Heart right ventricle (tissue), 16 donors: ENCODE measurements at regions of chr14 and their contacts with region 1.

Region 1: DNA sequence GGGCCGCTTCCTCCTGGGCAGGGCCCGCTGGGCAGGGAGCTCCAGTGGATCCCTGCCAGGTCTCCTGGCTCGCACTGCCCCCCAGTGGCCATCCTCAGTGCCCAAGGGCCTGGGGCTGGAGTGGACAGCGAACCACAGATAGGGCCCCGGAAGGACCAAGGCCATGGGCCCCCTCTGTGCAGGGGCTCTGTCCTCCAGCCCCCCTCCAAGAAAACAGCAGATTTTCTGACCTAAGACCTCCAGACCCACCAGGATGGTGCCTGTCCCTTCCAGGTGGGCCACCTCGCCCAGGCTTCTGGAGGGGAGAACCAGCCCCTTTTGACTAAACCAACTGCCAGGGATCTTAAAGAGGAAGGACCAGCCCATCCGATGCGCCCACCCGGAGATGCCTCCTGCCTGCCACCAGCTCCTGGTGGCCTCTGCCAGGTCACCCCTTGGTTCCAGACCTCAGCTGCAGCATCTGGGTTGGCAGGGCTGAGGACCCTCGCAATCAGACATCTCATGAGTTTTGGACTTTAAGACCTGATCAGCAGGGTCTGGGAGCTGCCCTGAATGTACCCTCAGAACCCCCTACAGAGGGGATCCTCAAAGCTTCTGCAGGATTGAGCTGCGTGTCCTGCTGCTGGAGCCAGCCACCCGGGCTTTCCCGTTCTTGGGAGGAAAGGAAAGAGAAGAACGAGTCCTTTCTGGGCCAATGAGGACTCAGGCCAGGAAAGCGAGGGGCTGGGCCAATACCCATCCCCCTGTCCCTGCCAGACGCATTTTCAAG is 325.8 kb upstream of the DIO3 start:
- DNase-seq: peak; percentile 21 to 55
- ATAC-seq: peak in 5 of 8 donors; percentile 65 to 68 (median 66)
- H3K4me3 ChIP-seq: no peak overlapping the region
- H3K27ac ChIP-seq: no peak overlapping the region
- H3K4me1 ChIP-seq: no peaks in the 10 kb centered on the region
- H3K27me3 ChIP-seq: peaks cover 0 to 46% (median 25%) of the 10 kb centered on the region in 7 donors
- CTCF ChIP-seq: peak in 7 of 9 donors; percentile 56 to 74 (median 61)

Region 2: DNA sequence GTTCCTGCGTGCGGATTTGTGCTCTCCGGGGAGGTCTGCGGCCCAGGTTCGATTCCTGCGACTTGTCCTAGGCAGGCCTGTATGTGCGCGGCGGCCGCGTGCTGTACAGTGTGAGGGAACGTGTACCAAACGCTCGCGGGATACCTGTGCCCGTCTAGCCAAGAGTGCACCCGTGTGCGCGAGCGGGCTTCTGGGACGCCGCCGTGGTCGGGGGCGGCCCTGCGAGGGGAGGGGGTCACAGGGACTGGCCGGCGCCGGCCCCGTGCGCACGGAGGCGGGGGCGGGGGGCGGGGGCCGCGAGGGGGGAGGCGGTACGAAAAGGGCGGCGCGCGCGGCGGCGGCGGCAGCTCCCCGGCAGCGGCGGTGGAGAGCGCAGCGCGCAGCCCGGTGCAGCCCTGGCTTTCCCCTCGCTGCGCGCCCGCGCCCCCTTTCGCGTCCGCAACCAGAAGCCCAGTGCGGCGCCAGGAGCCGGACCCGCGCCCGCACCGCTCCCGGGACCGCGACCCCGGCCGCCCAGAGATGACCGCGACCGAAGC is 508.9 kb before region 1 on chr14 and contains the start of gene DLK1:
- intact Hi-C with region 1: loop called in 1 of 10 experiments (anchors 10 kb)
- DNase-seq: no peak
- ATAC-seq: peak in 1 of 8 donors; percentile 20
- H3K4me3 ChIP-seq: peak within 1 kb of the TSS in 1 of 10 donors; percentile 11
- H3K27ac ChIP-seq: no peak within 1 kb of the TSS
- H3K4me1 ChIP-seq: no peaks in the 10 kb centered on the region
- H3K27me3 ChIP-seq: peaks cover 15 to 98% (median 92%) of the 10 kb centered on the region in 7 donors
- CTCF ChIP-seq: no peak
- total RNA-seq, gene DLK1: 1.3 to 35.0 (median 7.4) TPM

Region 3: DNA sequence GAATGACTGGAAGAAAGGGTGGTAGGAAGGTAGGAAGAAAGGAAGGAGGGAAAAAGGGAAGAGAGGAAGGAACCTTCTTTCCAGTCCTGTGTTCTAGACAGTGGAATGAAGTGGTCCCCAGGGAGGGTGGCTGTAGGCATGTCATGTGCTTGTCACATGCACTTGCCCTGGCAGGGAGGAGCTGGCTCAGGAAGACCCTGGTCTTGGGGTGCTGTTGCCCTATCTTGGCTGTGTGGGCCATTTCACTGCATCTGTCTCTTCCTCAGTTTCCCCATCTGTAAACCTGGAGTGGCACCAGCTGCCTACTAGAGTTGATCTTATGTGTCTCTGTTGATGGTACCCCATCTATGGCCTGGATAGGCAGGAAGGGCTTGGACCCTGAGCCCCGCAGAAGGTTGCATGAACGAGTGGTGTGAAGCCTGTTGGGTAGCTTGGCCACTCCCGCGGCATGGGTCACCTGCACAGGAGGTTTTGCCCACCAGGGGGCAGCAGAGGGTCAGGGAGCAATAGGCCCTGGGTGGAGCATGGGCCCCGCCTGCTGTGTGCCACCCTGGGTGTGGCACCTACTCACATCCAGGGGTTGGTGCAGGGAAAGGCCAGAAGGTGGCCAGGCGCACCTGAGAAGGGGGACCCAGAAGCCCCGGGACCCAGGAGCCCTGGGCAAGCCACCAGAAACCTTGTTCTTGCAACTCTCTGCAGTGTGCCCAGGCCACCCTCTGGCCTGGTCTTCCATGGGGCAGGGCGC is 384.5 kb before region 1 on chr14:
- intact Hi-C with region 1: loop called in 1 of 10 experiments (anchors 10 kb)
- DNase-seq: peak; percentile 44 to 69
- ATAC-seq: peak in 6 of 8 donors; percentile 42 to 72 (median 62)
- H3K4me3 ChIP-seq: no peak overlapping the region
- H3K27ac ChIP-seq: no peak overlapping the region
- H3K4me1 ChIP-seq: peaks cover 0 to 9% (median 0%) of the 10 kb centered on the region in 9 donors
- H3K27me3 ChIP-seq: peaks cover 0 to 13% (median 0%) of the 10 kb centered on the region in 7 donors
- CTCF ChIP-seq: peak; percentile 40 to 85 (median 61)

Region 4: DNA sequence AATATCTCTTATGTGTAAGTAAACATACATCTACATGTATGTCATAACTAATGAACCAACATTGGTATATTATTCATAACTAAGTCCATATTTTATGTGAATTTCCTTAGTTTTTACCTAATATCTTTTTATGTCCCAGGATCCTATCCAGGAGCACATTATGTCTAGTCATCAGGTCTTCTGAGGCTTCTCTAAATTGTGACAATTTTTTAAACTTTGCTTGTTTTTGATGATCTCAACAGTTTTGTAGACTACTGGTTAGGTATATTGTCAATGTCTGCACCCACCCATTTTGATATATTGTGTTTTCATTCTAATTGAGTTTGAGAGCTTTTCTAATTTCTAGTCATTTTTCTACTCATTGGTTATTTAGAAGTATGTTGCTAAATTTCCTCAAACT is 37.6 kb after region 1 on chr14:
- intact Hi-C with region 1: no loop called
- DNase-seq: no peak
- ATAC-seq: no peak
- H3K4me3 ChIP-seq: no peak overlapping the region
- H3K27ac ChIP-seq: no peak overlapping the region
- H3K4me1 ChIP-seq: no peaks in the 10 kb centered on the region
- H3K27me3 ChIP-seq: peaks cover 0 to 16% (median 0%) of the 10 kb centered on the region in 7 donors
- CTCF ChIP-seq: no peak

Region 5: DNA sequence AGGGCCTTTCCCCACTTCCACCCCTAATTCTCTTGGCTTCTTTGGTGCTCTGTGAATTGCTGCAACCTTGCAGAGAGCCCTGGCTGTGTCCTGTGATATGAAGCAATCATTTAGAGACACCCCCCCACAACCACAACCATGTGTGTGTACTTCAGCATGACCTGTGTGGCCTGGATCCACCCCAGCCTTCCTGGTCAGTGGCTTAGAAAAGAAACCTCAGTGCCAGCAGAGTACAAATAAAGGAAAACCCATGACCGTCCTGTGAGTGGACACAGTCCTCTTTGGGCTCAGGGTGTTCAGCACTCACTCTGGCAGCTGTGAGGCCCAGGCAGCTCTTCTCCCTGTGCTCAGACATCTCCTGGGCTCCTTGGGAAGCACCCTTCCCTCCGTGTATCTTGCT is 119.2 kb after region 1 on chr14:
- intact Hi-C with region 1: no loop called
- DNase-seq: no peak
- ATAC-seq: no peak
- H3K4me3 ChIP-seq: no peak overlapping the region
- H3K27ac ChIP-seq: no peak overlapping the region
- H3K4me1 ChIP-seq: peaks cover 0 to 3% (median 0%) of the 10 kb centered on the region in 9 donors
- H3K27me3 ChIP-seq: peaks cover 0 to 7% (median 0%) of the 10 kb centered on the region in 7 donors
- CTCF ChIP-seq: no peak